Ascending aorta (tissue), 2 donors: ENCODE measurements at regions of chr6 and their contacts with region 1.

Region 1: GRCh38 chr6:33391278-33391921 is at the start of gene KIFC1:
- DNase-seq: peak; percentile 96 to 99
- H3K4me3 ChIP-seq: peak within 1 kb of the TSS; percentile 65 to 77
- H3K27ac ChIP-seq: peak within 1 kb of the TSS; percentile 91 to 93
- H3K4me1 ChIP-seq: peaks cover 3 to 6% of the 10 kb centered on the region in 2 donors
- H3K27me3 ChIP-seq: no peaks in the 10 kb centered on the region
- CTCF ChIP-seq: peak; percentile 93 to 96 (median 94)
- total RNA-seq, gene KIFC1: not detected

Region 2: DNA sequence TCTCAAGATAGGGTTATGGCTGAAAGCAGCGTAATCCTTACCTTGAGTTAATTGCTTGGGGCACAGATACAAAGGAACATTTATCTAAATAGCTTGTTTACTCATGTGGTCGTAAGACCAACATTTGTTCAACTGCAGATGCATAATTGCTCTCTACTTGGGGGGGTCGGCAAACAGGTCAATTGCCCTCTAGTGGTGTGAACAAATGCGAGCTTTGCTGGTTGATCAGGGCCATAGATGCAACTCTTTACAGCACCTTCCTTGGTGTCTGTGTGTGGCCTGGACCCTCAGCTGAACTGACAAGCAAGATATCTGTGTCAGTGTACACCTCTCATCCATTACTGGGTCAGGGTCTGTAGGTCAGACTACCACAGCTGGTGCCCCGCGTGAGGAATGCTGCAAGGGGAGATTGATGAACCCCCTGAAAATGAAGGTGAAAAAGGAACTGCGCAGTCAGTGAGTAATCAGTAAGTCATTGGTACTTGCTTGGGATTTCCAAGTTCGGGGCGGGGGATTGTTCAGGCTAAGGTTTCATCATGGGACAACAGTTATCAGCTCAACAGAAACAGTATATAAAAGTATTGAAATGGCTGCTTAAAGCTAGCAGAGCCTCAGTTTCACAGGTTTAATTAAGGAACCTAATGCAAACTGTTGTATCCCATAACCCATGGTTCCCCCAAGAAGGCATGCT is 341.9 kb before region 1 on chr6:
- intact Hi-C with region 1: no loop called
- DNase-seq: no peak
- H3K4me3 ChIP-seq: no peak overlapping the region
- H3K27ac ChIP-seq: no peak overlapping the region
- H3K4me1 ChIP-seq: no peaks in the 10 kb centered on the region
- H3K27me3 ChIP-seq: no peaks in the 10 kb centered on the region
- CTCF ChIP-seq: no peak

Region 3: GRCh38 chr6:33200219-33201146 is 190.9 kb before region 1 on chr6 and contains the starts of genes RXRB and SLC39A7:
- intact Hi-C with region 1: loop called (anchors 5 kb)
- DNase-seq: peak; percentile 99 to 100
- H3K4me3 ChIP-seq: peak within 1 kb of the TSS; percentile 90 to 91
- H3K27ac ChIP-seq: peak within 1 kb of the TSS; percentile 95 to 97
- H3K4me1 ChIP-seq: peaks cover 16 to 32% of the 10 kb centered on the region in 2 donors
- H3K27me3 ChIP-seq: no peaks in the 10 kb centered on the region
- CTCF ChIP-seq: no peak
- total RNA-seq, gene RXRB: 21.6 TPM
- total RNA-seq, gene SLC39A7: 59.7 TPM

Region 4: DNA sequence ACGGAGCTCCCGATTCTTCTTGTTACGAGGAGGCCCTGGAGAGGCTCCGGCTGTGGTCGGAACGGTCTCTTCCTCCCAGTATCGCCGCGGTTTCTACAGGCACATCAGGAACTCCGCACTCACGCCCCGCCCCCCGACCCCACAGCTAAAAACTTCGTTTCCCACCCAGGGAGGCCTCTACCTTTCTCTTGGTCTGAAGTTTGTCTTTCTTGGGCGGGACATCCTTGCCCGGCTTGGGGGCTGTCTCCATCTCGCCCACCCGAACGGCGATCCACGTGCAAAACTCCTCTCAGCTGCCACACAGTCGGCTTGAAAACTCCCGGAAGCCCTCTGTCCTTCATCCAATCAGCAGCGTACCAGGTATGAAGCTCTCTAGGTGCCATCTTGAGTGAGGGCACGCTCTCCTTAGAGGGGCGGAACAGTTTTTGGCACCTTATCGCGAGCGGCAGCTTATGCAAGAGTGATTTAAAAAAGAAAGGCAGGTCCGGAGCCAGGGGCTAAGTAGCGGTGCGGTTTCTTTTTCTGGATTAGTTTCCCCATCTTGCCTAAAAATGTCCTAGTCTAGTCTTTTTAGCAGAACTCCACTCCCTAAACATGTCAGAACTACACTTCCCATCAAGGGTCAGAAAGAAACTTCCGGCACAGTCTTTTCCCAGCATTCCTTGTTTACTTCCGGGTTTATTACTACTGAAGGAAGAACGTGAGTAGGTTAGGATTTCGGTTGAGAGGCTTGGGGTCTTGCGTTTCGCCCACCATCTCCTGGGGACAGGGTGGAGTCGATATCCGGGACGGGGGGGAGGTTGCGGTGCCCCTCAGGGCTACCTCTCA is 102.3 kb before region 1 on chr6 and contains the starts of genes PFDN6 and WDR46:
- intact Hi-C with region 1: loop called (anchors 1 kb)
- DNase-seq: peak; percentile 45 to 92
- H3K4me3 ChIP-seq: peak within 1 kb of the TSS; percentile 79 to 80
- H3K27ac ChIP-seq: peak within 1 kb of the TSS; percentile 56 to 76
- H3K4me1 ChIP-seq: peaks cover 3 to 20% of the 10 kb centered on the region in 2 donors
- H3K27me3 ChIP-seq: no peaks in the 10 kb centered on the region
- CTCF ChIP-seq: no peak
- total RNA-seq, gene PFDN6: 11.3 TPM
- total RNA-seq, gene WDR46: 70.6 TPM

Region 5: GRCh38 chr6:33323623-33323948 is 67.8 kb before region 1 on chr6:
- intact Hi-C with region 1: loop called (anchors 1 kb)
- DNase-seq: no peak
- H3K4me3 ChIP-seq: peak overlapping the region; percentile 81 to 85
- H3K27ac ChIP-seq: peak overlapping the region; percentile 89 to 93
- H3K4me1 ChIP-seq: peaks cover 27 to 38% of the 10 kb centered on the region in 2 donors
- H3K27me3 ChIP-seq: no peaks in the 10 kb centered on the region
- CTCF ChIP-seq: peak in 1 of 3 experiments; percentile 1

Region 6: DNA sequence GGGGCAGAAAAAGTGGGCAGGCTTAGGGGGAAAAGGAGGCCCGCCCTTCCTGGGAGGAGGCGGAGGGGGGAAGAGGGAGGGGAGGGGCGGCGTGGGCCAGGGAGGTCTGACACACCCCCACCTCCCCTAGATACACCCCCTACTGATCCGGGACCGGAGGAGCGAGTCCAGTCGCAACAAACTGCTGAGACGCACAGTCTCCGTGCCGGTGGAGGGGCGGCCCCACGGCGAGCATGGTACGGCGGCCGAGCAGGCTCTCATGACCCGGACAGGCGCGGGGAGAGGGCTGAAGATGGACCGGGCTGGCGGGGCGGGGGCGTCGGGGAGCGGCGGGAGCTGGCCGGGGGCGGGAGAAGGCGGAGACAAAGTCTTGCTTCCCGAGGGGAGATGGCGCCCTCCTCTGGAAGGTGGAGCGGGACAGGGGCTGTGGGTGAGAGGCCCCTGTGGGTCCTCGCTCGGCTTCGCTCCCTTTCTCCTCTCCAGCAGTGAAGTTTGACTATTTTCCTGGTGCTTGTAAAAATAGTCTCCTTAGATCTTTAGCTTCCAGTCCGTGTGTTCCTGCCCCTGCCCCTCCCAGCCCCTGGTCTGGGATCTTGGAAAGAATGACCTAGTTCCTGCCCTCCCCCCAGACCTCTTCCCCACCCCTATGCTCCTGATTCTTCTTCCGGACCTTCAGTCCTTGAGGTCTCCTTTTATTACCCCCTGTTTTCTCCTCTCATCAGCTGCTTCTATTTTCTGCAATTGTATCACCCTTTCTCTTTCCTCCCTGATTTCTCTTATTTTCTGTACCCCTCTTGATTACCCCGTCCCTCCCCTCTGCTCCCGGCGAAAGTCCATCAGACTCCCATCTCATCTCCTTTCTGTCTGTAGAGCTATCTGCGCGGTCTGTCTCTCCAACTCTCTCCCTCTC is 34.5 kb after region 1 on chr6:
- intact Hi-C with region 1: loop called (anchors 1 kb)
- DNase-seq: peak; percentile 56 to 92
- H3K4me3 ChIP-seq: peak overlapping the region; percentile 53 to 79
- H3K27ac ChIP-seq: peak overlapping the region; percentile 92 to 95
- H3K4me1 ChIP-seq: peaks cover 17 to 23% of the 10 kb centered on the region in 2 donors
- H3K27me3 ChIP-seq: no peaks in the 10 kb centered on the region
- CTCF ChIP-seq: peak; percentile 27 to 74 (median 63)